A673 (cell line): ENCODE measurements at regions of chr6 and their contacts with region 1.

Region 1: GRCh38 chr6:7389451-7390225 is at the starts of genes CAGE1 and RIOK1:
- DNase-seq: peak; percentile 98
- H3K4me3 ChIP-seq: peak within 1 kb of the TSS; percentile 72
- H3K27ac ChIP-seq: peak within 1 kb of the TSS; percentile 88
- H3K4me1 ChIP-seq: peaks cover 19% of the 10 kb centered on the region
- H3K27me3 ChIP-seq: no peaks in the 10 kb centered on the region
- CTCF ChIP-seq: no peak; the same call in 1 of the 2 replicates
- total RNA-seq, gene CAGE1: 0.19 and 0.31 TPM in 2 replicates
- total RNA-seq, gene RIOK1: 54.1 and 56.5 TPM in 2 replicates

Region 2: GRCh38 chr6:7312616-7313504 is 76.8 kb before region 1 on chr6 and contains the start of gene SSR1:
- CTCF ChIA-PET with region 1: no interaction called
- POLR2A ChIA-PET with region 1: interaction called, 3 read pairs
- intact Hi-C with region 1: loop called (anchors 2 kb)
- DNase-seq: peak; percentile 98
- H3K4me3 ChIP-seq: peak within 1 kb of the TSS; percentile 85
- H3K27ac ChIP-seq: peak within 1 kb of the TSS; percentile 85
- H3K4me1 ChIP-seq: no peaks in the 10 kb centered on the region
- H3K27me3 ChIP-seq: no peaks in the 10 kb centered on the region
- CTCF ChIP-seq: no peak
- total RNA-seq, gene SSR1: 152 and 161 TPM in 2 replicates

Region 3: DNA sequence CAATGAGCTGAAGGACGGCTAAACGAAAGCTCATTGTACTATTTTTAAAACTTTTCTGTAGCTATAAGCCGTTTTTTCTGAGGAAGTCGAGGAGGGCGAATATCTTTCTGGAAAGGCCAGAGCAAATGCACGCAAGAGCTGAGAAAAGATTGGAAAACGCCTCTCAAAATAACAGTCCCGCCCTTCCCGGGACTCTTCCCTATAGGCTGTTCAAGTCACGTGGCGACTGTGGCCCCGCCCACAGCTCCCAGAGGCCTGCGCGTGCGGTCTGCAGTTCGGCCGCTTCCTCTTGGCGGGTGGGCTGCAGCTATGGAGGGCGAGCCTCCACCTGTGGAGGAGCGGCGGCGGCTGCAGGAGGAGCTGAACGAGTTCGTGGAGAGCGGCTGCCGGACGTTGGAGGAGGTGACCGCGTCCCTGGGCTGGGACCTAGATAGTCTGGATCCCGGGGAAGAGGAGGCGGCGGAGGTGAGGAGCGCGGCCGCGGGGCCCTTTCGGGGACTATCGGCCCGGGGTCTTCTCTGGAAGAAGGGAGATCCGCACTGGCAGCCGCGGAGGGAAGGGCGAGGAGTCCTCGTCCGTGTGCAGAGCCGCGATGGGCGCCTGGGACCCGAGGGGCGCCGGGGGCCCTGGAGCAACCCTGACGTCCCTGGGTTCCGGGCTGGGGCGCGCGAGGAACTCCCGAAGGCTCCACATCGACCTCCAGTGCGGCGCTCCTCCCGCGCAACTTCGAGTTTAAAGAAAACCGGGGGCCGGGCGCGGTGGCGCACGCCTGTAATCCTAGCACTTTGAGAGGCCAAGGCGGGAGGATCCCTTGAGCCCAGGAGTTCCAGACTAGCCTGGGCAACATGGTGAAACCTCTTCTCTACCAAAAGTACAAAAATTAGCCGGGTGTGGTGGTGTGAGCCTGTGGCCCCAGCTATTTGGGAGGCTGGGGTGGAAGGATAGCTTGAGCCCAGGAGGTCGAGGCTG is 200.6 kb after region 1 on chr6 and contains the start of gene SNRNP48:
- CTCF ChIA-PET with region 1: no interaction called
- POLR2A ChIA-PET with region 1: no interaction called
- intact Hi-C with region 1: loop called (anchors 5 kb)
- DNase-seq: peak; percentile 97
- H3K4me3 ChIP-seq: peak within 1 kb of the TSS; percentile 97
- H3K27ac ChIP-seq: peak within 1 kb of the TSS; percentile 88
- H3K4me1 ChIP-seq: peaks cover 15% of the 10 kb centered on the region
- H3K27me3 ChIP-seq: no peaks in the 10 kb centered on the region
- CTCF ChIP-seq: no peak
- total RNA-seq, gene SNRNP48: 27.4 and 29.4 TPM in 2 replicates